AG04449 (cell line): ENCODE measurements at regions of chr5 and their contacts with region 1.

Region 1: GRCh38 chr5:172932313-172933017 is 26.8 kb upstream of the RPL26L1 start:
- DNase-seq: no peak
- H3K4me3 ChIP-seq: no peak overlapping the region
- CTCF ChIP-seq: peak; percentile 95

Region 2: DNA sequence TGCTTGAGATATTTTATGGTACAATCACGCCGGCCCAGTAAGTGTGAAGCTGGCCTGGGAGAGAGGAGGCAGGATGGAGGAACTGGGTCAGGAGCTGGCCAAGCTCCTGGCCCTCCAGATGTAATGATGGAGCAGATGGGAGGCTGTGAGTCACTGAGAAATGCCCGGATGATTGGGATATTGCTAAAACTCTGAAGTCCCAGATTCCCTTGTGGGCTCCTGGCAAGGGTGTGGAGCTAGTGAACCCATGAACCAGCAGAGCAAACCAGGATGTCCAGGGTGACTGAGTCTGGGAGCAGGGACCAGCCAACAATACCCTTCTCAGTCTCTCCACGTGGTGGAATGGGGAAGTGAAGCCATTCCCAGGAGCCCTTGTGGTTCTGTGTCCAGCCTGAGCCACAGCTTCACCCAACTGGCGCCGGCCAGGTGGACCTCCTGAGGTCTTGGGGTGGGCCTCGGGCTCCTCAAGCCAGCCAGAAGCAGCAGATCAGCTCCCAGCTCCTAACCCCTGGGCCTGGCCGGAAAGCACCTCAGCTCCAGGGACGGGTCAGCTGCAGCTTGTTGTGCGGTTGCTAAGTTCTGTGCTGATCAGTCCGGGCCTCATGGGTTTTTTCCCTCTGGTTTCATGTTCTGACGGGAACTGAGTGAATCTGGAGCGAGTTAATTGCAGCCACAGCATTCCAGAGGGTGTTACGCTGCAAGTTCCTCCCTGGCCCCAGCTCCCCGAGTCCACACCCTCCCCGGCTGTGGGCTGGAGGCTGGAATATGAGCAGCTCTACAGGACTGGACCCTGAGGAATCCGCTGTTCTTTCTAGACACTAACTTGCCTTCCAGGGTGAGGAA is 199.1 kb before region 1 on chr5:
- CTCF ChIA-PET with region 1: interaction called, 17 read pairs
- POLR2A ChIA-PET with region 1: interaction called, 3 read pairs
- DNase-seq: peak; percentile 98
- H3K4me3 ChIP-seq: peak overlapping the region; percentile 36
- CTCF ChIP-seq: no peak

Region 3: GRCh38 chr5:172834415-172835289 is 97.8 kb before region 1 on chr5:
- CTCF ChIA-PET with region 1: interaction called, 18 read pairs
- POLR2A ChIA-PET with region 1: no interaction called
- DNase-seq: no peak
- H3K4me3 ChIP-seq: peak overlapping the region; percentile 91
- CTCF ChIP-seq: no peak

Region 4: DNA sequence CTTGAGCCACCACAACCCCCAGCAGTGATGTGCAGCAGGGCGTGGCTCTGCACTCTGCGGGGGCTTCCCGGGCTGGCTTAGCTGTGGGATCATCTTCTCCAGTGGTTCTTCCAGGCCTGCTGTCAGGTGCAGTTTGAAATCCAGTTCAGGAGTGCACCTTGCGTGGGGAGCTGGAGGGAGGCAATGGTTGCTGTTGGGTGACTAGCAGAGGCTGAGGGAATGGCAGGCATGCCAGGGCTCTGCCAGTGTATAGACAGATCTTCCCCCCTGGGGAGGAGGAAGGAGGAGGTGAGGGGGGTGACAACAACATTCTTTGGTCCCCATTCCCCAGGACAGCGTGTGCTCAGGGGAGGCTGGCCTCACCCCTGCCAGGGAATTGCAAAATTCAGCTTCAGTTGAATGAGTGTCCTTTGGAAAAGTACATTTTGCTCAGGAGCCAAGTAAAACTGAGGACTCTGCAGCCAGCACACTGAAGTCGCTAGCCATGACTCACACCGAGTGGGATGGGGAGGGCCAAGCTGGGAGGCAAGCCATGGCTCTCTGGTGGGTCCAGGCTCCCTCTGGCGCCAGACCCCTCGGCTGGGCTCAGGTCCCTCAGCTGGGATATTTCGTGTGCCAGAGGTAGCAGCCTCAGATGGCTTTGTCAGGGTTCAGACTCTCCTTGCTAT is 63.4 kb before region 1 on chr5:
- CTCF ChIA-PET with region 1: interaction called, 16 read pairs
- POLR2A ChIA-PET with region 1: interaction called, 6 read pairs
- DNase-seq: peak; percentile 72
- H3K4me3 ChIP-seq: no peak overlapping the region
- CTCF ChIP-seq: peak; percentile 58

Region 5: GRCh38 chr5:172910828-172911627 is 21.4 kb before region 1 on chr5:
- CTCF ChIA-PET with region 1: interaction called, 88 read pairs
- POLR2A ChIA-PET with region 1: interaction called, 3 read pairs
- DNase-seq: no peak
- H3K4me3 ChIP-seq: no peak overlapping the region
- CTCF ChIP-seq: peak; percentile 38

Region 6: DNA sequence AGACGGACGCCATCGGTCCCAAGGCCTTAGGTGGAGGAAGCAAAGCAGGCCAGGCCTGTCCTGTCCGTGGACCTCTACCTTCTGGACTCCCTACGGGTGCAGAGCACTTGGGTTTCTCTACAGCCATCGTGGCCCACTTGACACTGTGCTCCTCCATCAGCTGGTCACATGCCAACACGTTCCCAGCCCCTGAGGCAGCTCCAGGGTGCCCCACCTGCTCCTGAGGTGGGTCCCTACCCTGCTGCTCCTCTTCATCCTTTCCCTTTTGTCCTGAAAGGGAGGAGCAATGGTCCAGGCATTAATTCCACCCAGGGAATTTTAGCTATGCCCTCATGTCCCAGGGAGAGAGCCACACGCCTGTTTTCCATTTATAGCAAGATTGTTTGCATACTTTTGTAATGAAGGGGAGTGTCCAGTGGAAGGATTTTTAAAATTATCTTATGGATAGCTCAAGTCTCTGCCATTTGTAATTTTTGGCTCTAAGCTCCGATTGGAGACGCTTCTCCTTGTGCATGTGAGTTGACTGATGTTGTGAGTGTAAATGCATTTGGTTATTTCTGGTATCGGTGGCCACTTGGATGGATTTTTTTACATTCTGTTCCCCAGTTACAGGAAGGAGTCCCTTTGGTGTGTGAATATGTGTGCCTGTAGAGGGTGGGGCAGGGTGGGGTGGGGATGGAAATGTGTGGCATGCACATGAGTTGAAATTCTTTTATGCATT is 19.5 kb after region 1 on chr5:
- CTCF ChIA-PET with region 1: interaction called, 95 read pairs
- POLR2A ChIA-PET with region 1: interaction called, 8 read pairs
- DNase-seq: no peak
- H3K4me3 ChIP-seq: no peak overlapping the region
- CTCF ChIP-seq: no peak

Region 7: GRCh38 chr5:173108914-173109313 is 176.4 kb after region 1 on chr5:
- CTCF ChIA-PET with region 1: no interaction called
- POLR2A ChIA-PET with region 1: no interaction called
- DNase-seq: no peak
- H3K4me3 ChIP-seq: no peak overlapping the region
- CTCF ChIP-seq: no peak

Region 8: DNA sequence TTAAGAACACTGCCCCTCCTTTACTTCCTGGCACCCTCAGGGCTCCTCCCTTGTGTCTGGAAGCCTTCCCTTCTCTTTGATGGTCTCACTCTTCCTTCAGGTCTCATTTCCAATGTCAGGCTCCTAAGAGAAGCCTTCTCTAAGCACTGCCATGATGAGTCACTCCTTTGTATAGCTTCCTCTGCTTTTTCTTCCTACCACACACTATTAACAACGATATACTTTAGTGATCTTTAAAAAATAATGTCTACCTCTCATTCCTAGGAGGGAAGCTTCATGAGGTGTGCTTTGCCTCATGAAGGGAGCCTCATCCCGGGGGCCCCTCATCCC is 603.8 kb after region 1 on chr5:
- CTCF ChIA-PET with region 1: no interaction called
- POLR2A ChIA-PET with region 1: no interaction called
- DNase-seq: no peak
- H3K4me3 ChIP-seq: no peak overlapping the region
- CTCF ChIP-seq: no peak